AG04449 (cell line): ENCODE measurements at regions of chrX and their contacts with region 1.

Region 1: DNA sequence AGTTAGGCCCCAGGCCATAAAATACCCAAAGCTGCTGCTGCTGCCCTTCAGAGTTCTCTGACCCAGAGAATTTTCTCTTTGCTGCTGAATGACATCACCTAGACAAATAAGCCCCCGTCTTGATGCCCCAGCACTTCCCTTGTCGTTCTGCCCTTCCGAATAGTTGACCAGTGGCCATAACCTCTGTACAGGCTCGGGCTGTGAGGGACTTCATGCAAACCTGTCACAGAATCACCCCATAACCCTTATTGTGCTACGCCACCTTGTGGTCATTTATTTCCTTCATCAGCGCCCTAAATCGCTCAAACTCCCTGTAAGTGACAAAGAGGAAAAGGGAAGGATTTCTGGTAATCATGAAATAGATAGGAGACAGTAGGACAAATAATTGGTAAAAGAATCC is 18.8 kb downstream of the SPACA5 start:
- DNase-seq: no peak
- H3K4me3 ChIP-seq: no peak overlapping the region
- CTCF ChIP-seq: peak; percentile 46

Region 2: GRCh38 chrX:47831788-47832187 is 193.8 kb before region 1 on chrX:
- CTCF ChIA-PET with region 1: interaction called, 17 read pairs
- POLR2A ChIA-PET with region 1: no interaction called
- DNase-seq: no peak
- H3K4me3 ChIP-seq: no peak overlapping the region
- CTCF ChIP-seq: peak; percentile 48

Region 3: GRCh38 chrX:47854474-47854873 is 171.1 kb before region 1 on chrX:
- CTCF ChIA-PET with region 1: interaction called, 15 read pairs
- POLR2A ChIA-PET with region 1: no interaction called
- DNase-seq: no peak
- H3K4me3 ChIP-seq: no peak overlapping the region
- CTCF ChIP-seq: peak; percentile 29

Region 4: DNA sequence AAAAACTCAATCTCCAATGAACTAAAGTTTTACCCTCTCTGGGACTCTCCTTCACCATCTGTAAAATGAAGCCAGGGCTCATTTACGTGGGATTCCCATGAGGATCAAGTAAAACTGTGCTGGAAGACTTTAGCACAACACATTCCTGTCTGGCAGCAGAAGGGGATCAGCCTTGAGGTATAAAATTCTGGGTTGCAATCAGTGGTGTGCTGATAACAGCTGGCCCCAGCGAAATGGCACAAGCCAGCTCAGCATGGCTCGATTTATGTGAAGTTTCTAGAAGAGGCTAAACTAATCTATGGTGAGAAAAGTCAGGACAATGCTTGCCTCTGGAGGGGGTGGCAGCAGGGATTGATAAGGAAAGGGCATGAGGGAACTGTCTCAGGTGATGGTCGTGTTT is 17.5 kb after region 1 on chrX:
- CTCF ChIA-PET with region 1: interaction called, 11 read pairs
- POLR2A ChIA-PET with region 1: no interaction called
- DNase-seq: no peak
- H3K4me3 ChIP-seq: no peak overlapping the region
- CTCF ChIP-seq: no peak

Region 5: DNA sequence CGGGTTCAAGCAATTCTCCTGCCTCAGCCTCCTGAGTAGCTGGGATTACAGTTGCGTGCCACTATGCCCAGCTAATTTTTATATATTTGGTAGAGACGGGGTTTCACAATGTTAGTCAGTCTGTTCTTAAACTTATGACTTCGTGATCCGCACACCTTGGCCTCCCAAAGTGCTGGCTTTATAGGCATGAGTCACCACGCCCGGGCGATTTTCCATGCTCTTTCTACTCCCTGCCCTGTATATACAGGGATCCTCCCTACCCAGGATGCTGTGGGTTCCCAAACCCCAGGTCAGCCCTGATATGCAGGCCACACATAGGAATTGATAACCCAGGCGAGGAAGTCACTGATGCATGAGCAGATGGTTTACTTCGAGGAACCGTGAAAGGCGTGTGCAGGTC is 139.7 kb after region 1 on chrX:
- CTCF ChIA-PET with region 1: no interaction called
- POLR2A ChIA-PET with region 1: no interaction called
- DNase-seq: no peak
- H3K4me3 ChIP-seq: no peak overlapping the region
- CTCF ChIP-seq: no peak

Region 6: GRCh38 chrX:48493890-48494364 is 468.4 kb after region 1 on chrX:
- CTCF ChIA-PET with region 1: interaction called, 11 read pairs
- POLR2A ChIA-PET with region 1: no interaction called
- DNase-seq: no peak
- H3K4me3 ChIP-seq: no peak overlapping the region
- CTCF ChIP-seq: peak; percentile 39